ENCODE measurements at regions of chr19 and their contacts with region 1.

Region 1: GRCh38 chr19:9914315-9915207 is 21.8 kb downstream of the OLFM2 start:
- DNase-seq: peak; percentile 76
- H3K4me3 Mint-ChIP-seq: peak overlapping the region; percentile 45
- H3K27ac Mint-ChIP-seq: no peak overlapping the region
- H3K4me1 Mint-ChIP-seq: peaks cover 12% of the 10 kb centered on the region
- H3K27me3 Mint-ChIP-seq: peaks cover 26% of the 10 kb centered on the region

Region 2: DNA sequence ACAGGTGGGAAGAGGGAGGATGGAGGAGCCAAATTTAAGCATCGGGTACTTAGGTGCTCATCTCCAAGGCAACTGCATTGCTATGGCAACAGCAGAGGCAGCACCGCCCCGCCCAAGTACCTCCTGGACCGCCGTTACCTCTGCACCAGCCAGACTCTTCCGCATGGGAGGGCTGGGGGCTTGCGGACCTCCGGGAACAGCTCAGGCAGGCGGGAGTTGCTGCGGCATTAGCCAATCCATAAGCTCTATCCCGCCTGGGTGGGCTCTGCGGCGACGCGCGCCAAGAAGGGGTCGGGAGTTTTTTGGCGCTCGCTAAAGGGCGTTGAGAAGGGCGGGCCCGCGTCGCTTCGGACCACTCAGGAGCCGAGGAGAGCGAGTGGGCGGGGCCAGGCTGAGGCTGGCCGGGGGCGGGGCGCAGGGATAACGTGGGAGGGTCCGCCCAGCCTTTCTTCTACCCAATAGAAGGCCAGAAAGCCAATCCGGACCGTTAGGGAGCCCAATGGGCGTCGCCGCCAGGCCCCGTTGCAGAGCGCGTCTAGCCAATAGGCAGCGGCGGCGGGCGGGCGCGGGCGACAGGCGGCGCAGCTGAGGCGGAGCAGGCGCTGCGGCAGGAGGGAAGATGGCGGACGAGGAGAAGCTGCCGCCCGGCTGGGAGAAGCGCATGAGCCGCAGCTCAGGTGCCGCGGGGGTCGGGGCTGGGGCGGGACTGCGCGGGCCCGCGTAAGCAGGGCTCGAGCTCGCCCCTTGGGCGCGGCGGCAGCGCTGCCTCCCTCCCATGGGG is 79.6 kb before region 1 on chr19 and contains the start of gene PIN1:
- intact Hi-C with region 1: loop called (anchors 1 kb)
- DNase-seq: peak; percentile 99
- H3K4me3 Mint-ChIP-seq: peak within 1 kb of the TSS; percentile 90
- H3K27ac Mint-ChIP-seq: peak within 1 kb of the TSS; percentile 74
- H3K4me1 Mint-ChIP-seq: peaks cover 14% of the 10 kb centered on the region
- H3K27me3 Mint-ChIP-seq: no peaks in the 10 kb centered on the region
- total RNA-seq, gene PIN1: 84.3 and 87.3 TPM in 2 replicates

Region 3: GRCh38 chr19:9857920-9858746 is 56.4 kb before region 1 on chr19:
- intact Hi-C with region 1: loop called (anchors 2 kb)
- DNase-seq: no peak
- H3K4me3 Mint-ChIP-seq: peak overlapping the region; percentile 72
- H3K27ac Mint-ChIP-seq: peak overlapping the region; percentile 77
- H3K4me1 Mint-ChIP-seq: peaks cover 49% of the 10 kb centered on the region
- H3K27me3 Mint-ChIP-seq: no peaks in the 10 kb centered on the region

Measured in activated T-helper 2 cell treated with anti-CD3 and anti-CD28 coated beads, Interferon-gamma antibody, Interleukin-2, Interleukin-4, amounts not matched to agents 10 μg/mL and 5 μg/mL and 100 μg/mL, durations not matched to agents 14 hours and 24 hours and 36 hours (primary cell).